T-cell (primary cell): ENCODE measurements at regions of chr3 and their contacts with region 1.

Region 1: GRCh38 chr3:42096796-42097565 is 5.8 kb downstream of the TRAK1 start:
- DNase-seq: no peak
- ATAC-seq: no peak
- H3K4me3 ChIP-seq: no peak overlapping the region
- H3K4me3 Mint-ChIP-seq: no peak overlapping the region
- H3K27ac ChIP-seq: no peak overlapping the region
- H3K27ac Mint-ChIP-seq: no peak overlapping the region
- H3K4me1 ChIP-seq: peaks cover 0 to 3% of the 10 kb centered on the region in 2 experiments
- H3K4me1 Mint-ChIP-seq: peaks cover 12 to 23% (median 18%) of the 10 kb centered on the region in 3 donors
- H3K27me3 ChIP-seq: no peaks in the 10 kb centered on the region
- H3K27me3 Mint-ChIP-seq: no peaks in the 10 kb centered on the region

Region 2: DNA sequence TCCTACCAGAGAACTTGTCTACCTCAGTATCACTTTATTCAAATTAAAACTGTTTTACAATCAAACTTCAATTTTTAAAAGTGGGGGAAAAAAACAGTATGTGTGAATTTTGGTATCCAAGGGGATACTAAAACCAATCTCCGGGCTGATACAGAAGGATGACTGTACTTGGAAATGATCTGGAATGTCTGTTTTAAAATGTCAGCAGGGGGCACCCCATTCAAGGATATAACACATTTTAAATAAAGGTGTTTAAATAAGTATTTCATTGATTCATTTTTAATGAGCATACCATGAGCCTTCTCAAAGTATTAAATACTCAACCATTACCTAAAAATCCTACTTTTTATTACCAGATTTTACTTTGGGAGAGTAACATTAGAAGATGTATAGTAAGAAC is 203.0 kb before region 1 on chr3:
- CTCF ChIA-PET with region 1: interaction called, 4 to 10 read pairs
- POLR2A ChIA-PET with region 1: no interaction called
- DNase-seq: peak in 7 of 35 experiments; percentile 3 to 59 (median 4)
- ATAC-seq: no peak
- H3K4me3 ChIP-seq: no peak overlapping the region
- H3K4me3 Mint-ChIP-seq: no peak overlapping the region
- H3K27ac ChIP-seq: no peak overlapping the region
- H3K27ac Mint-ChIP-seq: no peak overlapping the region
- H3K4me1 ChIP-seq: no peaks in the 10 kb centered on the region
- H3K4me1 Mint-ChIP-seq: no peaks in the 10 kb centered on the region
- H3K27me3 ChIP-seq: no peaks in the 10 kb centered on the region
- H3K27me3 Mint-ChIP-seq: no peaks in the 10 kb centered on the region

Region 3: GRCh38 chr3:42055293-42055692 is 41.7 kb before region 1 on chr3:
- CTCF ChIA-PET with region 1: no interaction called
- POLR2A ChIA-PET with region 1: no interaction called
- DNase-seq: no peak
- ATAC-seq: no peak
- H3K4me3 ChIP-seq: no peak overlapping the region
- H3K4me3 Mint-ChIP-seq: no peak overlapping the region
- H3K27ac ChIP-seq: no peak overlapping the region
- H3K27ac Mint-ChIP-seq: no peak overlapping the region
- H3K4me1 ChIP-seq: no peaks in the 10 kb centered on the region
- H3K4me1 Mint-ChIP-seq: peaks cover 15 to 22% (median 15%) of the 10 kb centered on the region in 3 donors
- H3K27me3 ChIP-seq: no peaks in the 10 kb centered on the region
- H3K27me3 Mint-ChIP-seq: no peaks in the 10 kb centered on the region

Region 4: DNA sequence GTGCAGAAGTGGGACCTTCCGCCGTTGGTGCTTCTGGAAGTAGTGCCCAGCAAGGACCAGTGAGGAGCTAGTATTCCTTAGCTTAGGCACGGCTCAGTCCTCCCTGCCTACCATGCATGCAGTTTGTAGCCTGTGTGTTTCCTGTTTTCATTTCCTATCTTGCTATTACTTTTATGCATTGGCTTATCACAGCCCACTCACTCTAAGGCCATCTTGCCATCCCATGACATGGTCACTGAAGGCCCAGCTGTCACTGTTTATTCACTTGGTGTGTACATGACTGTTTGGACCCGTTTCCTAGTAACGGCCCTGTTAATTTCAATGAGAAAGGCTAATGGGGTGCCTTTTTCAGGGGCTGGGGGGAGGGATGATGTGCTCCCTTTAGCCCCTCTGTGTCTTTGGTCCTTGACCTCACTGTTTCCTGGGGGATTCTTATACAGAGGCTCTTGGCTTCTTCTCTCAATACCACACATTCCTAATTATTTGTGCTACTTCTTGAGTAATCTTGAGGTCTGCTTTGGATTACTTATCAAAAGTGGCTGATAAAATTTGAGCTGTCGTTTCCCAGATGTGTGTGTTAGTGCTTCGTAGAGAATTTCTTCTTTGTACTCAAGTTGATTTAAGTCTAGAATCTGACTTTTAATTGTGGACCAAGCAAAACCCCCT is 30.3 kb before region 1 on chr3:
- CTCF ChIA-PET with region 1: interaction called, 4 to 12 read pairs
- POLR2A ChIA-PET with region 1: no interaction called
- DNase-seq: no peak
- ATAC-seq: peak in 1 of 4 experiments; percentile 9
- H3K4me3 ChIP-seq: no peak overlapping the region
- H3K4me3 Mint-ChIP-seq: no peak overlapping the region
- H3K27ac ChIP-seq: no peak overlapping the region
- H3K27ac Mint-ChIP-seq: peak overlapping the region in 1 of 2 donors; percentile 51
- H3K4me1 ChIP-seq: no peaks in the 10 kb centered on the region
- H3K4me1 Mint-ChIP-seq: peaks cover 31 to 38% (median 32%) of the 10 kb centered on the region in 3 donors
- H3K27me3 ChIP-seq: no peaks in the 10 kb centered on the region
- H3K27me3 Mint-ChIP-seq: no peaks in the 10 kb centered on the region